GM10248 (cell line): ENCODE measurements at regions of chr1 and their contacts with region 1.

Region 1: GRCh38 chr1:39609618-39610331 is 29.7 kb downstream of the HEYL start:
- DNase-seq: peak; percentile 88
- CTCF ChIP-seq: peak; percentile 65

Region 2: DNA sequence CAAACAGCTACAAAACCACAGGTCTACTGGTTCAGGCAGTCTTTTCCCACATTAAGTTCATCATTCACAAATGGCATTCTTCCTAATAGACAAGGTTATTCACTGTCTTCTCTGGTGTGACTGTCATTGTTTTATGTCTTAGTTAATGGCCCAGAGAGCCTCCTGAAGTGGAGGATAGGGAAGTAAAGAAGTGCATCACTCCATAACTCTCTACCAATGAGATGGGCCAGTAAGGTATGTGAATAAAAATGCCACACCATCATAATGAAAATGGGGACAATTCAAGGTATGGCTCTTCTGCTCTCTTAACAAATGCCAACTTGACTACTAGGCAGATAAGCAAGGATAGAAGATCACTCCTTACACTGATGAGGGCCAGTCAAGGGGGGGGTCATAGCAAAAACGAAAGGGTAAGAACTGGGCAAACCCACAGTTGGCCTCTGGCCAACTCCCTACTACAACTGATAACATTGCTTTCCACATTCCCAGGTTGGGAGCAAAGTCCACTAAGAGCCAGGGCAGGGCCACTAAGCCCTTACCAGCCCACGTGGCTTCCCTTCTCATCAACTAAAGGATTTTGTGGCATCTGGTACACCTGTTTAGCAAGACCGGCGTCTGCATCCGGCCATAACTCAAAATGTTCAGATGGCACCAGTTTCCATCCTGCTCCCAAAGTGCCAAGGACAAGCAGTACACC is 43.2 kb before region 1 on chr1:
- CTCF ChIA-PET with region 1: interaction called, 3 read pairs
- POLR2A ChIA-PET with region 1: interaction called, 11 read pairs
- DNase-seq: no peak
- CTCF ChIP-seq: no peak

Region 3: DNA sequence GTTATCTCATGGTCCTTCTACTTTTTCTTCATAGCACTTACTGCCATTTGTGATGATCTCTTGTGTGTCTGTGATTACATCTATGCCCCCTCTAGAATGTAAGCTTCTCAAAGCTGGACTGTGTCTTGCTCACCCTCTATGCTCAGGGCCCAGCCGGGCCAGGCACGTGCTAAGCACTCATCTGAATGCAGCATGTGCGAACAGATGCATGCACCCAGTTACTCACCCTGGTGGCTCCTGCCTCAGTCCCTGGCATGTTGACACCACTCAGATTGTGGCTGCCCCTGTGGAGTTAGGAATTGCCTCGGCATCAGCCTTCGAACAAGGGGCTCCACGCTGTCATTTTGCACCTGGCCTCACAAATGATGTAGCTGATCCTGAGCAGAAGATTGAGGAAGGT is 13.6 kb before region 1 on chr1:
- CTCF ChIA-PET with region 1: interaction called, 11 read pairs
- POLR2A ChIA-PET with region 1: no interaction called
- DNase-seq: no peak
- CTCF ChIP-seq: no peak

Region 4: DNA sequence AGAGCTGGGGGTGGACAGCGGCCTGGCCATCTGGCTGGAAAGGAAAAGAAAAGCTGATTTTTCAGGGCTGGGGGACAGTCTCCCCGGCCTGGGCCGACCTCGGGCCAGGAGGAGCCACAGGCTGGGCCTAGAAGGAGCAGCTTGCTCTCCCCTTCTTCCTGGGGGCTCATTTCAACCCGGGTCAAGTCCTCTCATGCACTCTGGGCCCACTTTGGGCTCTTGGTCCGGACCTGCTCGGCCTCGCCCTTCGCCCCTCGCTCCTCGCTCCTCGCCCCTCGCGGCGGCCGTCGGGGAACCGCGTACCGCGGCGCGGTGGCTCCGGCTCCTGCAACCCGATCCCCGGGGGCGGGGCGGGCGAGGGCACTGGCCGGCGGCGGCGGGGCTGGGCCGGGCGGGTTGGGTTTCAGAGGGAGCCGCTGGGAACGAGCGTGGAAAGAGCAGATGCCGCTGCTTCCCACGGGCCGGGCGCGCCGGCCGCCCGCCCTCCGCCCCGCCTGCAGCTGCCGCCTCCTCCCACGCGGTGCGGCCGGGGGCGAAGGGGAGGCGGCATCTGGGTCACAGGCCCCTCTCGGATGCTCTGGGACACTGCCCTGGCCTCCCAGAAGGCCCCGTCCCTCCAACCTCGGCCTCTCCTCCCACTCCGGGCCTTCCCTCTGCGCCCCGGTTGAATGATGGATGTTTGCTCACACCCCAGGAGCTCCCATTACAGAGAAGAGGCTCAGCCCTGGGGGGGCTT is 23.1 kb after region 1 on chr1:
- CTCF ChIA-PET with region 1: interaction called, 11 read pairs
- POLR2A ChIA-PET with region 1: no interaction called
- DNase-seq: no peak
- CTCF ChIP-seq: no peak

Region 5: GRCh38 chr1:39646232-39647081 is 36.7 kb after region 1 on chr1:
- CTCF ChIA-PET with region 1: interaction called, 307 read pairs
- POLR2A ChIA-PET with region 1: no interaction called
- DNase-seq: no peak
- CTCF ChIP-seq: peak; percentile 9

Region 6: GRCh38 chr1:39666772-39667171 is 57.0 kb after region 1 on chr1:
- CTCF ChIA-PET with region 1: interaction called, 307 read pairs
- POLR2A ChIA-PET with region 1: no interaction called
- DNase-seq: peak; percentile 85
- CTCF ChIP-seq: no peak

Region 7: GRCh38 chr1:39825432-39825951 is 215.7 kb after region 1 on chr1:
- CTCF ChIA-PET with region 1: no interaction called
- POLR2A ChIA-PET with region 1: no interaction called
- DNase-seq: peak; percentile 41
- CTCF ChIP-seq: no peak